CD4-positive, alpha-beta T cell (primary cell): ENCODE measurements at regions of chr19 and their contacts with region 1.

Region 1: DNA sequence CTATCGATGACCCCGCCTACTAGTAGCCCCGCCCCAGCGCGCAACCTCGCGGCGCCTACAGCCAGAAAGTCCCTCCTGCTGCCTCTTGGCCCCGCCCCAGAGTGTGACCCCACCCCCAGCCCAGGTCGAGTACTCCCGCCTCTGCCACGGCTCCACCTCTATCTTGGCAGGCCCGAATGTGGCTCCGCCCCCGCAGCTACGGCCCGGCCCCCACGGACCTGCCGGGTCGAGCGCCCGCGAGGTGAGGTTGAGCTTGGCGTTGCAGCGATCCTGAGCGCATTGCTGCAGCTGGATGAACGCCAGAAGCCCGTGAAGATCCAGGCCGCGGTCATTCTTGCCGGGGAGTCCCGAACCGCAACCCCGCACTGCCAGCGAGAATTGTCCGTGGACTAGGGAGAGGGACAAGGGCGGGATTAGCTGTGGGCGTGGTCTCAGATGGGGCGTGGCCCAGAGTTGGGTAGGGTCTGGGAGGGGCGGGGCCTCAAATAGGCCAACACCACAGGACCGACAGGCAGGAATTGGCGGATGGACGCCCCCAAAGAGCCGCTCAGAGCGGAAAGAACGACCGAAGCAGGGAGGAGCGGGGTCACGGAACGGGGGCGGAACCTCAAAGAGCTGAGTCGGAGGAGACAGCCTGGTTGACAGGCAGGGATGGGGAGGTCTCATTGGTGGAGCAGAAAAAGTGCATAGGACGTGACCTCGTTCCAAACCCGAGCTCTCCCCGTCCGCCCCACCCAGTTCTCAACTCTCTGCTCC is 1.8 kb downstream of the LYPD3 start:
- DNase-seq: peak; percentile 99 to 100 (median 100)
- ATAC-seq: peak; percentile 77
- H3K4me3 ChIP-seq: peak overlapping the region; percentile 88
- H3K4me3 Mint-ChIP-seq: peak overlapping the region; percentile 95
- H3K27ac ChIP-seq: peak overlapping the region; percentile 85 to 88
- H3K27ac Mint-ChIP-seq: peak overlapping the region; percentile 97
- H3K4me1 ChIP-seq: peaks cover 50% of the 10 kb centered on the region
- H3K4me1 Mint-ChIP-seq: peaks cover 67% of the 10 kb centered on the region
- H3K27me3 ChIP-seq: no peaks in the 10 kb centered on the region
- H3K27me3 Mint-ChIP-seq: no peaks in the 10 kb centered on the region
- CTCF ChIP-seq: no peak

Region 2: GRCh38 chr19:43290568-43291359 is 172.8 kb before region 1 on chr19:
- CTCF ChIA-PET with region 1: no interaction called
- POLR2A ChIA-PET with region 1: no interaction called
- intact Hi-C with region 1: no loop called
- DNase-seq: peak in 2 of 14 experiments; percentile 5 to 25
- ATAC-seq: no peak
- H3K4me3 ChIP-seq: no peak overlapping the region
- H3K4me3 Mint-ChIP-seq: no peak overlapping the region
- H3K27ac ChIP-seq: no peak overlapping the region
- H3K27ac Mint-ChIP-seq: no peak overlapping the region
- H3K4me1 ChIP-seq: no peaks in the 10 kb centered on the region
- H3K4me1 Mint-ChIP-seq: no peaks in the 10 kb centered on the region
- H3K27me3 ChIP-seq: peaks cover 0 to 4% of the 10 kb centered on the region in 2 experiments
- H3K27me3 Mint-ChIP-seq: peaks cover 18% of the 10 kb centered on the region
- CTCF ChIP-seq: no peak

Region 3: GRCh38 chr19:43438291-43439096 is 25.1 kb before region 1 on chr19:
- CTCF ChIA-PET with region 1: interaction called, 24 read pairs
- POLR2A ChIA-PET with region 1: interaction called, 69 read pairs
- intact Hi-C with region 1: loop called in 1 of 2 experiments (anchors 1 kb)
- DNase-seq: peak in 7 of 14 experiments; percentile 10 to 34 (median 26)
- ATAC-seq: peak; percentile 37
- H3K4me3 ChIP-seq: no peak overlapping the region
- H3K4me3 Mint-ChIP-seq: peak overlapping the region; percentile 76
- H3K27ac ChIP-seq: peak overlapping the region; percentile 74 to 90
- H3K27ac Mint-ChIP-seq: peak overlapping the region; percentile 96
- H3K4me1 ChIP-seq: peaks cover 41% of the 10 kb centered on the region
- H3K4me1 Mint-ChIP-seq: peaks cover 64% of the 10 kb centered on the region
- H3K27me3 ChIP-seq: no peaks in the 10 kb centered on the region
- H3K27me3 Mint-ChIP-seq: no peaks in the 10 kb centered on the region
- CTCF ChIP-seq: no peak

Region 4: DNA sequence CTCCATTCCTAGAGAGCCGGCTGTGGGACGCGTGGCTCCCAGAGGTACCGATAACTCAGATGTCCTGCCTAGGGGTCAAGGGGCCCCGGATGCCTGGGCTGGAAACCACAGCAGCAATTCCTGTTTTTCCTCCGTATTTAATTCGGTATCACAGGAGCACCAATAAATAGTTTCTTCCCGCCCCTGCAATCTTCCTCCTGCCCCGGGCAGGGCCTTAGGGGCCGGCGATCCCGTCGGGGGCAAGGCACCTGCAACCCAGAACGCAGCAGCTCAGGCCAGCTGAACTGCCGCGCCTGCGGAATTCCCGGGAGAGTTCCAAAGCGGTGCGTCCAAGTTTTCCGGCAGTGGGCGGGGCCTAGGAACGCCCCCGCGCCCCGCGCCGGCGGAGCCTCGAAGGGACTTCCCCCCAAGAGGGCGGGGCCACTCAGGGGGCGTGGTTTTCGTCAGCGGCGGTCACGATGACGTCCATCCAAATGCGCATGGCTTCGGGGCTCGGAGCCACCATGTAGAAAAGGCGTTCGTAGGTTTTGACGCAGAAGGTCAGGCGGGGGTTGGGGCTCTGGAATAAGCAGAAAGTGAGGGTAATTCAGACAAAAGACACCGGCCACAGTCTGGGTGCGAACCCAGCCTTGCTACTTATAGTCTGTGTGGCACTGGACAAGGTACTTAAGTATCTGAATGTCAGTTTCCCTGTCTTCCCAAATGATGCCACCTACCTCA is 11.6 kb after region 1 on chr19:
- CTCF ChIA-PET with region 1: interaction called, 8 read pairs
- POLR2A ChIA-PET with region 1: interaction called, 54 read pairs
- intact Hi-C with region 1: loop called (anchors 1 kb)
- DNase-seq: peak; percentile 89 to 98 (median 96)
- ATAC-seq: peak; percentile 79
- H3K4me3 ChIP-seq: peak overlapping the region; percentile 59
- H3K4me3 Mint-ChIP-seq: peak overlapping the region; percentile 77
- H3K27ac ChIP-seq: peak overlapping the region; percentile 65 to 93
- H3K27ac Mint-ChIP-seq: peak overlapping the region; percentile 92
- H3K4me1 ChIP-seq: peaks cover 40% of the 10 kb centered on the region
- H3K4me1 Mint-ChIP-seq: peaks cover 36% of the 10 kb centered on the region
- H3K27me3 ChIP-seq: no peaks in the 10 kb centered on the region
- H3K27me3 Mint-ChIP-seq: no peaks in the 10 kb centered on the region
- CTCF ChIP-seq: no peak

Region 5: GRCh38 chr19:43503501-43504425 is 40.2 kb after region 1 on chr19:
- CTCF ChIA-PET with region 1: interaction called, 22 read pairs
- POLR2A ChIA-PET with region 1: interaction called, 88 read pairs
- intact Hi-C with region 1: loop called (anchors 1 kb)
- DNase-seq: peak; percentile 98 to 100 (median 99)
- ATAC-seq: peak; percentile 92
- H3K4me3 ChIP-seq: peak overlapping the region; percentile 91
- H3K4me3 Mint-ChIP-seq: peak overlapping the region; percentile 94
- H3K27ac ChIP-seq: peak overlapping the region; percentile 85 to 88
- H3K27ac Mint-ChIP-seq: peak overlapping the region; percentile 96
- H3K4me1 ChIP-seq: peaks cover 35% of the 10 kb centered on the region
- H3K4me1 Mint-ChIP-seq: peaks cover 40% of the 10 kb centered on the region
- H3K27me3 ChIP-seq: no peaks in the 10 kb centered on the region
- H3K27me3 Mint-ChIP-seq: no peaks in the 10 kb centered on the region
- CTCF ChIP-seq: no peak

Region 6: DNA sequence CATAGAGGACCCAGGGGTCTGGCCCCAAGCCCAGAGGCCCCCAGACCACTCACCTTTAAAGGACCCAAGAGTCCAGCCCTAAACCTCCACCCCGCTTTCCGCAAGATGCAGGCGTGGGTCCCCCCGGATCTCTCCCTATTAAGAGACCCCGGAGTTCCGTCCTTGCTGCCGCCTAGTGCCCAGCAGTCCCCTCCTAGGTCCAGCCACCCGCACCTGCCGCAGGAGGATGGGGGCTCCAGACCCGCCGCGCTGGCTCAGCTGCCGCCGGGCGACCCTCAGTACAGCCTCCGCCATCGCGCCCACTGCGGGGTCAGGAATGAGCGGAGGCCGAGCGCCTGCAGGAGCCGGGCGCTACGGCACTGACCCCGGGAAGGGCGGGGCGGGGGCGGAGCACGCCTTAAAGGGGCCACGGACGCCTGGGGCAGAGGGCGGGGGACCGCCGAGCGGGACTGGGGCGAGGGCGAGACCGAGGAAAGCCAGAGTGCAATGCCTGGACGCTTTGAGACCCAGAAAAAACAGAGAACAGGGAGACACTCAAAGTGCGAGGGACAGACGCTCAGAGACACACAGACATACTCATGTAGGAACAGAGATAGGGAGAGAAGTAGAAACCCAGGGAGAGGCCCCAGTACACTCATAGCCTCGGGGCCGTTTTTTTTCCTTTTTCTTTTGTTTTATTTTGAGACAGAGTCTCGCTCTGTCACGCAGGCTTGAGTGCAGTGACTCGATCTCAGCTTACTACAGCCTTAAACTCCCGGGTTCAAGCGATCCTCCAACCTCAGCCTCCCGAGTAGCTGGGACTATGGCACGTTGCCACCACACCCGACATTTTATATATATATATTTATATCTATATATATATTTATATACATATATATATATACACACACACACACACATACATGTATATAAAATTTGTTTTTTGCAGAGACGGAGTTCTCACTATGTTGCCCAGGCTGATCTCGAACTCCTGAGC is 63.6 kb after region 1 on chr19 and contains the start of gene ETHE1:
- CTCF ChIA-PET with region 1: interaction called, 5 read pairs
- POLR2A ChIA-PET with region 1: interaction called, 44 read pairs
- intact Hi-C with region 1: no loop called
- DNase-seq: peak; percentile 30 to 81 (median 68)
- ATAC-seq: peak; percentile 67
- H3K4me3 ChIP-seq: peak within 1 kb of the TSS; percentile 93
- H3K4me3 Mint-ChIP-seq: peak within 1 kb of the TSS; percentile 77
- H3K27ac ChIP-seq: peak within 1 kb of the TSS; percentile 66 to 73
- H3K27ac Mint-ChIP-seq: peak within 1 kb of the TSS; percentile 76
- H3K4me1 ChIP-seq: peaks cover 32% of the 10 kb centered on the region
- H3K4me1 Mint-ChIP-seq: peaks cover 28% of the 10 kb centered on the region
- H3K27me3 ChIP-seq: no peaks in the 10 kb centered on the region
- H3K27me3 Mint-ChIP-seq: no peaks in the 10 kb centered on the region
- CTCF ChIP-seq: no peak
- total RNA-seq, gene ETHE1: 20.2 to 21.7 TPM

Region 7: DNA sequence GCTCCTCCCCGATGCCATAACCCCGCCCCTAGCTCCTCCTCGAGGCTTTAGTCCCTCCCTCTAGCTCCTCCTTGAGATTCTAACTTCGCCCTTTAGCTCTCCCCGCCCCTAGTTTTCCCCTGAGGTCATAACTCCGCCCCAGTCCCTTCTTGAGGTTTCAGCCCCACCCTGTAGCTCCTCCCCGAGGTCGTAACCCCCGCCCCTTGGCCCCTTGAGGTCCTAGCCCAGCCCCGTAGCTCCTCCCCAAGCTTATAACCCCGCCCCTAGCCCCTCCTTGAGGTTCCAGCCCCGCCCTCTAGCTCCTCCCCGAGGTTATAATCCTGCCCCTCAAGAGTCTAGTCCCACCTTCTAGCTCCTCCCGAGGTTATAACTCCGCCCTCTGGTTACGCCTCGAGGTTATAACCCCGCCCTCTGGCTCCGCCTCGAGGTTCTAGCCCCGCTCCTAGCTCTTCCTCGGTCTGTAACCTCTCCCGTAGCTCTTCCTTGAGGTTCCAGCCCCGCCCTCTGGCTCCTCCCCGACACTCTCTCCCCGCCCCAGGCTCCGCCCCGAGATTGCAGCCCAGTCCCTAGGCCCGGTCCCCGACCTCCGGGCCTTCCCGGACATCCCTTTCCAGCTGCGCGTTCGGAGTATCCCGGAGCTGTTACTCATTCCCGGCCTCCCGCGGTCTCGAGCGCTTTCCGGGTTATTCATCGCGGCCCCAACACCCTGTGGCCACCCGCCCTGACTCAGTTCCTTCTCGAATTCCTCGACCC is 205.0 kb after region 1 on chr19:
- CTCF ChIA-PET with region 1: interaction called, 5 read pairs
- POLR2A ChIA-PET with region 1: interaction called, 18 read pairs
- intact Hi-C with region 1: loop called in 1 of 2 experiments (anchors 2 kb)
- DNase-seq: peak; percentile 87 to 99 (median 96)
- ATAC-seq: peak; percentile 80
- H3K4me3 ChIP-seq: peak overlapping the region; percentile 68
- H3K4me3 Mint-ChIP-seq: peak overlapping the region; percentile 87
- H3K27ac ChIP-seq: peak overlapping the region in 1 of 2 donors; percentile 37
- H3K27ac Mint-ChIP-seq: peak overlapping the region; percentile 61
- H3K4me1 ChIP-seq: peaks cover 54% of the 10 kb centered on the region
- H3K4me1 Mint-ChIP-seq: peaks cover 52% of the 10 kb centered on the region
- H3K27me3 ChIP-seq: no peaks in the 10 kb centered on the region
- H3K27me3 Mint-ChIP-seq: no peaks in the 10 kb centered on the region
- CTCF ChIP-seq: no peak